Esophagus squamous epithelium (tissue), 5 donors: ENCODE measurements at regions of chr21 and their contacts with region 1.

Region 1: DNA sequence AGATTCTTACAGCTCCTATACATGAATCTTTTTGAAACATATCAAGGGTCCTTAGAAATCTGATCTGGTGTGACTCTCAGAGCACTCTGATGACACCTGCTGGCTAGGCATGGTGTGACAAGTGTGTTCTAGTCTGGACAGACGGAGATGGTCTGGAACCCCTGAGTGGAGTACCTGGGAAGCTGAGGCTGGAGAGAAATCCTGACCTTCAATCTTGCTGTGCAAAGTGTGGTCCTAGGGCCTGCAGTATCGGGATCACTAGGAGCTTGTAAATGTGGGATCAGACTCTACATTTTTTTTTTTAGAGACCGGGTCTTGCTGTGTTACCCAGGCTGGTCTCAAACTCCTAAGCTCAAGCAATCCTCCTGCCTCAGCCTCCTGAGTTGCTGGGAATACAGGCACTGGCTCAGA is 78.6 kb upstream of the SOD1 start:
- DNase-seq: no peak
- H3K4me3 ChIP-seq: no peak overlapping the region
- H3K27ac ChIP-seq: no peak overlapping the region
- H3K4me1 ChIP-seq: no peaks in the 10 kb centered on the region
- H3K27me3 ChIP-seq: peaks cover 0 to under 1% (median 0%) of the 10 kb centered on the region in 4 donors
- CTCF ChIP-seq: peak; percentile 46 to 80 (median 69)
- POLR2A ChIP-seq: no peak

Region 2: GRCh38 chr21:31107871-31108270 is 473.0 kb before region 1 on chr21:
- intact Hi-C with region 1: loop called (anchors 10 kb)
- DNase-seq: no peak
- H3K4me3 ChIP-seq: no peak overlapping the region
- H3K27ac ChIP-seq: peak overlapping the region in 1 of 4 donors; percentile 17
- H3K4me1 ChIP-seq: peaks cover 0 to 5% (median 0%) of the 10 kb centered on the region in 3 donors
- H3K27me3 ChIP-seq: no peaks in the 10 kb centered on the region
- CTCF ChIP-seq: no peak
- POLR2A ChIP-seq: no peak

Region 3: DNA sequence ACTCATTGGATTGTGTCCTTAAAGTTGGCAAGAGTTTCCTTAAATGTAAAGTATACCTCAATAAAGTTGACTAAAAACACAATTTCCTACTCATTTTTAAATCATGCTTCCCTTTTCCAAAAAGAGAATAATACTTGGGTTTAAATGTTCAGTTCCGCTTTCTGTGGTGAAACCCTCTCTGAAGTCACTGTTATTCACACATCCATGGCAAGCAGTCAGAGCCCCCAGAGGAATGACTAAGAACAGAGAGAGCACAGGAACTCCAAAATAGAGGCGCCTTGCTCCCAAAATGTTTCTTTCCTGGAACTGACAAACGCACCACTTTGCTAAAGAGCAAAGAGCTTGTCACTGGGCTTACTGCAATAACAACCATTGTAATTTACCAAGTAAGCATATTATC is 379.3 kb before region 1 on chr21:
- intact Hi-C with region 1: loop called (anchors 5 kb)
- DNase-seq: no peak
- H3K4me3 ChIP-seq: peak overlapping the region in 1 of 4 donors; percentile 15
- H3K27ac ChIP-seq: peak overlapping the region in 2 of 4 donors; percentile 25 to 68
- H3K4me1 ChIP-seq: peaks cover 0 to 16% (median 0%) of the 10 kb centered on the region in 3 donors
- H3K27me3 ChIP-seq: no peaks in the 10 kb centered on the region
- CTCF ChIP-seq: no peak
- POLR2A ChIP-seq: no peak